PC-9 (cell line): ENCODE measurements at regions of chr3 and their contacts with region 1.

Region 1: DNA sequence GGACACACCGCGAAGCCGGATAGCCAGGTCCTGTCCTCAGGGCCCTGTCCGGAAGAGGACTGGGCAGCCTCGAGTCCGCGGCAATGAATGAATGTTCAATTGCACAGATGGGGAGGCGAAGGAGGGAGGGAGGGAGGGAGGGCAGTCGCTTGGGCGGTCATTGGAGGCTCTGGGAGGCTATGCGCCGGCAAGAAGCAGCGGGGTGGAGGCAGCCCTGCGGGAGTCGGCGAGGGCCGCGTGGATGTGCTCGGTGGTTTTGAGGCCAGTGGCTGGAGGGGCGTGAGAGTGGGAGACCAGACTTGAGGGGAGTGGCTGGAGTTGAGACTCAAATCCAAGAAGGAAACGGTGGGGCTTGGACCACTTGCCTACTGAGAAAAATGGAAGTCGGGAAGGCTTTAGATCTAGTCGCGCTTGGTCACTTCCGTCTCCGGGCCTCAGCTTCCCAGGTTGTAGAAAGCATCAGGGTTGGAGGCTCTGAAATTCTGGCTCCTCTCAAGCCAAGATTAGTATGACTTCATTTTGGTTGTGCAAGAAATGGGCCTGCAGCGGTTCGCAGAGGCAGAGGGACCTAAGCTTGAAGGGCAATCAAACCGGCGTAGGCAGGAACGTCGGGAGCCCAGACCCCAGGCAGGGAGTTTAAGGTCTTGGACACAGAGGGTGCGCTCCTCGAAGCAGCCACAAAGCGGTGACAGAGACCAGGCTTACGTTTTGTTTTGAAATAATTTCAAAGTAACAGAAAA is 21.1 kb upstream of the PLXND1 start:
- DNase-seq: peak; percentile 81 to 85
- H3K4me3 ChIP-seq: peak overlapping the region; percentile 99
- H3K27ac ChIP-seq: peak overlapping the region; percentile 96
- H3K4me1 ChIP-seq: peaks cover 27% of the 10 kb centered on the region
- H3K27me3 ChIP-seq: no peaks in the 10 kb centered on the region
- CTCF ChIP-seq: peak; percentile 92

Region 2: DNA sequence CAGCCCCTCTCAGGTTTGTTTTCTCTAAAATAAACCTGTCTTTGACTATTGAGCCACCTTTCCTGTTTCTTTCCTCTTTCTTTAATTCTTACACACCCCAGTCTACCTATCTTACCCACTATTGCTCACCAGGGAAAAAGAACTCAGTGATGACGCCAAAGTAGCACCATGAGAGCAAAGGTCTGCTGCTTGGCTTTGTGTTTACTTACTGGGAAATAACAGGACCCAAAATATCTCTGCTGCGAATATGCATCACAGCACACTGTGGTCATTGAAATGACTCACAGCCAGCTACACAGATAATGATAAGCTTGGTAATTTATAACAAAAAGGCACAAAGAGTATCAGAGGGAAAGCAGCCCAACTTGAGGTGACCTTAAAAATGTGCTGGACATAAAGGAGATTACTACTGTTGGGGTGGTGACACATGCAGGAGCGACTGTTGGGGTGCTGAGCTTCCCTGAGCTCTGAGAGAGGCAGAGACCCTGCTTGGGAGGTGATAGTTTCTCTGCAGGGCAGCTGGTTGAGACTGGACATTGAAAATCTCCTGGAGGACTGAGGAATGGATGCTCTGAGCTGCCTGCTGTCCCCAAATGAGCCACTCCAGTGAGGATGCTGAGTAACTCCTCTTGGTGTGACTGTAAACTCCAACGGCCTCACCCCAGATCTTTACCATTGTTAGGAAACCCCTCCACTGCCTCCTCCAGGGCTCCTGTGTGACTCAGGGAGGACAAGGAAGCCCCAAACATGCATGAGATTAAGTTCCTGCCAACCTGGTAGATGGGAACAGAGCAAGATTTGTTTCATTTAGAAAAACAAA is 213.7 kb before region 1 on chr3:
- CTCF ChIA-PET with region 1: no interaction called
- POLR2A ChIA-PET with region 1: interaction called, 27 read pairs
- intact Hi-C with region 1: no loop called
- DNase-seq: peak in 1 of 2 experiments; percentile 89
- H3K4me3 ChIP-seq: no peak overlapping the region
- H3K27ac ChIP-seq: peak overlapping the region; percentile 45
- H3K4me1 ChIP-seq: peaks cover 28% of the 10 kb centered on the region
- H3K27me3 ChIP-seq: no peaks in the 10 kb centered on the region
- CTCF ChIP-seq: no peak

Region 3: DNA sequence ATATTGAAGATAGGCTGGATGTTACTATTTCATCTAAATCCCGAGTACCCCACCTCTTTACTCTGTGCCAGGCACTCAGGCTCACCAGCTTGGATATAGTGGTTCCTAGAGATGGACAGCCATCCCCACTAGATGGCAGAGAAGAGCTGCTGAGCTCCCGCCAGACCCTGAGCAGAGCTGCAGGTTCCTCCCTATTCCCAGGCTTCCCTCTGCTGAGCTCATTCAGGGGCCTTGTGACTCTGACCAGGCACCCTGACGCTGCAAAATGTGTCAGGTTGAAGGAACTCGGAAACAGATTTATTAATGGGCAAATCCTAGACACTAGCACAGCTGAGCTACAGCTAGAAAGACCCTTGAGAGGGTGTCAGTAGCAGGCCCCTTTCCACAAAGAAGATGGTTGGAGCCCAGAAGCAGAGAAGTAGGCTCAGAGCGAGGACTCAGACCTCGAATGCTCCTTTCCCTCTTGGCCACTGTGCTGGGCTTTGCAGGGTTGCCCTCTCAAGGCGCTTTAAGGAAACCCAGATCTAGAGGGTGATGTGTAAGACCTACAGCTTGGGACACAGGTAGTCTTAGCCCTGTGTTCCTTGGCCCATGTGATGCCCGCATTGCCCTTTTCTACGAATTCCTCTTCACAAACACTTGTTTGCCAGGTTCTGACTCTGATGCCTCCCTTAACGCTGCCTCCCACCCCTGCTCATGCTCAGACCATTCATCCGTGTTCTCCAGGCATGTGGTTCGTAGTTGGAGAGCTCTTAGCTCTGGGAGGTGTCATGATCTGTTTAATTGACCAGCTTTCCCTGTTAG is 137.2 kb before region 1 on chr3:
- CTCF ChIA-PET with region 1: interaction called, 24 read pairs
- POLR2A ChIA-PET with region 1: interaction called, 13 read pairs
- intact Hi-C with region 1: loop called (anchors 1 kb)
- DNase-seq: peak; percentile 80 to 84
- H3K4me3 ChIP-seq: no peak overlapping the region
- H3K27ac ChIP-seq: peak overlapping the region; percentile 66
- H3K4me1 ChIP-seq: peaks cover 49% of the 10 kb centered on the region
- H3K27me3 ChIP-seq: no peaks in the 10 kb centered on the region
- CTCF ChIP-seq: peak; percentile 91

Region 4: DNA sequence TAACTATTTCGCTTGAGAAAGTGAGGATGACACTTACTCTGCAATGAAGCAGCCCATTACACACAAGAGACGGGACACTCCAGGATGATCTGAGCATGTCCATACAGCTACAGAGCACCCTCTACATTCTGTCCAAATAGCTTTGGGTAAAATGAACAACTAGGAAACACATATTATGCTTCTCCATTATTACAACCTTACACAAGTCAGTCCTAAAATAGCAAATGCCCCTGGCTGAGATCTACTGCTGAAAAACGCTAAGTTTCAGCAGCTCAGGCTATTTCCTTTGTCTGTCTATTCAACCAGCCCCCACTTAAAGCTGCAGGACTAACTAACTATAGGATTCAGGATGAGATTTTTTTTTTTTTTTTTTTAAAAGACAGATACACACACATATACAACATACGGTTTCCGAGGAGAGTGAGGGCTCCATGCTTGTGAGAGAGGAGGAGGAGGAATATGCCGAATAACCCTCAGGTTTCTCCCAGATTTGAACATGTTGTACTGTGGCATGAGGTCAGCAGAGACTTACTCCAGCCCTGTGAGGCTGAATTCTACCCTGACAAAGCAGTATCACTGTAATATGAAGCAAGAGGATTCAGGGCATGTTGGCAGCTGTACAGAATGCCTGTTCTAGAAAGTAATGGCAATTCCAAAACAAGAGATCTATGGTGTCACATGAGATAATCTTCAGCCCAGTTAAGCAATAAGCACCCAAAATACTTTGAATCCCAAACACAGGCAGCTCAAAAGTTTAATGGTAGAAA is 96.1 kb after region 1 on chr3:
- CTCF ChIA-PET with region 1: no interaction called
- POLR2A ChIA-PET with region 1: interaction called, 16 read pairs
- intact Hi-C with region 1: no loop called
- DNase-seq: peak; percentile 35 to 39
- H3K4me3 ChIP-seq: no peak overlapping the region
- H3K27ac ChIP-seq: peak overlapping the region; percentile 32
- H3K4me1 ChIP-seq: peaks cover 30% of the 10 kb centered on the region
- H3K27me3 ChIP-seq: no peaks in the 10 kb centered on the region
- CTCF ChIP-seq: no peak

Region 5: DNA sequence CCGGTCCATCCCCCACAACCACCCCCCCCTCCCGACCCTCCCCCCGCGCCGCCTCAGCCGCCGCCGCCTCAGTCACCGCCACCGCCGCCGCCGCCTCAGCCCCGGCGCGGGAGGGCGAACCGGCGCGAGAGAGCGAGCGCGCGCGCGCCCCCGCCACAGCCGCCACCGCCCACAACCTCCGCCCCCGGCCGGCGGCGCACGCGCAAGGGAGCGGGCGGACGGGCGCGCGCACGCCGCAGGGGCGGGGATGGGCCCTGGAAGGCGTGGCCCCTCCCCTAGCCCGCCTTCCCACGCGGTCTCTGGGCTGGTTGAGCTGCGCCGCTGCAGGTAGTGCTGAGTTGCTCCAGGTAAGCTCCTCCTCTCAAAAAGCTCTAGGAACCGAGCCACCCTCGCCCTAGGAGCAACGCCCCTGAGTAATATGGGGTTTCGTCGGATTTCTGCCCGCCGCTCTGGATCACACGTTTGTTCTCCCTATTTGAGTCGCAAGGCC is 266.0 kb after region 1 on chr3 and contains the start of gene TMCC1:
- CTCF ChIA-PET with region 1: no interaction called
- POLR2A ChIA-PET with region 1: no interaction called
- intact Hi-C with region 1: loop called (anchors 2 kb)
- DNase-seq: peak; percentile 83 to 96
- H3K4me3 ChIP-seq: peak within 1 kb of the TSS; percentile 100
- H3K27ac ChIP-seq: peak within 1 kb of the TSS; percentile 88
- H3K4me1 ChIP-seq: peaks cover 41% of the 10 kb centered on the region
- H3K27me3 ChIP-seq: no peaks in the 10 kb centered on the region
- CTCF ChIP-seq: no peak
- total RNA-seq, gene TMCC1: 41.4 and 48.1 TPM in 2 replicates

Region 6: GRCh38 chr3:129950318-129951046 is 322.9 kb after region 1 on chr3:
- CTCF ChIA-PET with region 1: no interaction called
- POLR2A ChIA-PET with region 1: no interaction called
- intact Hi-C with region 1: no loop called
- DNase-seq: no peak
- H3K4me3 ChIP-seq: no peak overlapping the region
- H3K27ac ChIP-seq: no peak overlapping the region
- H3K4me1 ChIP-seq: no peaks in the 10 kb centered on the region
- H3K27me3 ChIP-seq: peaks cover 30% of the 10 kb centered on the region; the same call in 1 of the 2 replicates
- CTCF ChIP-seq: no peak

Region 7: GRCh38 chr3:130093741-130094391 is 466.3 kb after region 1 on chr3:
- CTCF ChIA-PET with region 1: no interaction called
- POLR2A ChIA-PET with region 1: interaction called, 4 read pairs
- intact Hi-C with region 1: loop called (anchors 1 kb)
- DNase-seq: peak; percentile 62 to 66
- H3K4me3 ChIP-seq: peak overlapping the region; percentile 46; the same call in 1 of the 2 replicates
- H3K27ac ChIP-seq: peak overlapping the region; percentile 77
- H3K4me1 ChIP-seq: peaks cover 26% of the 10 kb centered on the region
- H3K27me3 ChIP-seq: no peaks in the 10 kb centered on the region
- CTCF ChIP-seq: no peak